ENCODE measurements at regions of chr3 and their contacts with region 1.

Region 1: GRCh38 chr3:122564155-122564912 is at the starts of genes DTX3L and PARP9:
- DNase-seq: peak; percentile 84
- H3K4me3 Mint-ChIP-seq: peak within 1 kb of the TSS; percentile 97
- H3K27ac Mint-ChIP-seq: peak within 1 kb of the TSS; percentile 95
- H3K4me1 Mint-ChIP-seq: peaks cover 65% of the 10 kb centered on the region
- H3K27me3 Mint-ChIP-seq: no peaks in the 10 kb centered on the region
- total RNA-seq, gene DTX3L: 32.4 and 34.3 TPM in 2 replicates
- total RNA-seq, gene PARP9: 29.8 and 31.0 TPM in 2 replicates

Region 2: GRCh38 chr3:122576174-122576940 is 12.0 kb after region 1 on chr3:
- intact Hi-C with region 1: loop called (anchors 1 kb)
- DNase-seq: no peak
- H3K4me3 Mint-ChIP-seq: peak overlapping the region; percentile 35
- H3K27ac Mint-ChIP-seq: peak overlapping the region; percentile 88
- H3K4me1 Mint-ChIP-seq: peaks cover 44% of the 10 kb centered on the region
- H3K27me3 Mint-ChIP-seq: no peaks in the 10 kb centered on the region

Region 3: DNA sequence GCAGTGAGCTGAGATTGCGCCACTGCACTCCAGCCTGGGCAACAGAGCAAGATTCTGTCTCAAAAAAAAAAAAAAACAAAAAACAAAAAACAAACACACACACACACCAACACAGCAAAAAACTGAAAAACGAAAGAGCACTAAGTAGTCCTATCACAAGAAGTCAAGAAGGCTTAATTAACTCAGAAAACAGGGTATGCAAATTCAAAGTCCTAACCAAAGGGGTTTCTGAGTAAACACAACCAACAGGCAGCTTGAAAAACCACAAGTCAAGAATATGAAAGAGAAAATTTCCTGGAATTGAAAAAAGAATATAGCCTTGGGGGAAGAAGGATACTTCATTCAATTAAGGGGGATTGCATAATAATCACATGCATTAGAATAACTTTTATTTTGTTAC is 78.6 kb after region 1 on chr3:
- intact Hi-C with region 1: no loop called
- DNase-seq: no peak
- H3K4me3 Mint-ChIP-seq: no peak overlapping the region
- H3K27ac Mint-ChIP-seq: peak overlapping the region; percentile 33
- H3K4me1 Mint-ChIP-seq: peaks cover 26% of the 10 kb centered on the region
- H3K27me3 Mint-ChIP-seq: peaks cover 9% of the 10 kb centered on the region